ENCODE measurements at regions of chr7 and their contacts with region 1.

Region 1: GRCh38 chr7:64098-64915 is 128.1 kb upstream of the FAM20C start:
- DNase-seq: peak; percentile 49
- H3K4me3 ChIP-seq: no peak overlapping the region
- H3K27ac ChIP-seq: no peak overlapping the region
- H3K4me1 ChIP-seq: no peaks in the 10 kb centered on the region
- H3K27me3 ChIP-seq: no peaks in the 10 kb centered on the region
- CTCF ChIP-seq: peak; percentile 31 to 55
- POLR2A ChIP-seq: no peak

Region 2: DNA sequence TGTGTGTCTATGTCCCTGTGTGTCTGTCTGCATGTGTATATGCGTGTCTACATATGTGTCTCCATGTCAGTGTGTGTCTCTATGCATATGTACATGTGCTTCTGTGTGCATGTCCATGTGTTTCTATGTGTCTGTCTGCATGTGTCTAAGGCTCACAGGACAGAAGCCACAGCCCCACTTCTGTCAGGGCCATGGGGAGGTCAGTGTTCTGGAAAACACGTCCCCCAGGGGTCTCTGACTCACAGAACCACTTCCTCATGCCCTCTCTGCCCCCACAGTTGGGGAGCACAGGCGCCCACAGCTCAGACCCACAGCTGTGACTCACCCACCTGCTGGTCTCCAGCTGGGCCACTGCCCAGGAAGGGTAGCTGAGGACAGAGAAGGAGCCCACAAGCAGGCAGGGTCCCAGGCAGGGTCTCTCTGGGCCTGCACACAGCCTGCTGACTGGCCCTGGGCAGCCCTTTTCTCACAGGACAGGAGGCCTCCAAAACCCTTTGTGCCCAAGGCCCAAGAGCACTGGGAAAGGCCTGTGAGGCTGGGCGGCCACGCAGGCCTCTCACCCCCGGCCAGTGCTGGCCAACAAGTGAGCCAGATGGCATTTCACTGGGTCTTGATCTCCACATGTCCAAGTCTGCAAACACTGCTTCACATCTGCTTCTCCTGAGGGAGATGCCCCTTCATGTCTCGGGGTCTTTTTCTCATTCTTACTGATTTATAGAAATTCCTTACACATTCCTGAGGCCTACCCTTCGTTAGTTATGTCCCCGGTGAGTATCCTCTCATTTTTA is 25.1 kb after region 1 on chr7:
- CTCF ChIA-PET with region 1: interaction called, 18 read pairs
- POLR2A ChIA-PET with region 1: no interaction called
- dilution Hi-C with region 1: no loop called
- intact Hi-C with region 1: no loop called
- DNase-seq: peak; percentile 84
- H3K4me3 ChIP-seq: no peak overlapping the region
- H3K27ac ChIP-seq: peak overlapping the region; percentile 37
- H3K4me1 ChIP-seq: peaks cover 24% of the 10 kb centered on the region
- H3K27me3 ChIP-seq: no peaks in the 10 kb centered on the region
- CTCF ChIP-seq: no peak
- POLR2A ChIP-seq: no peak

Region 3: DNA sequence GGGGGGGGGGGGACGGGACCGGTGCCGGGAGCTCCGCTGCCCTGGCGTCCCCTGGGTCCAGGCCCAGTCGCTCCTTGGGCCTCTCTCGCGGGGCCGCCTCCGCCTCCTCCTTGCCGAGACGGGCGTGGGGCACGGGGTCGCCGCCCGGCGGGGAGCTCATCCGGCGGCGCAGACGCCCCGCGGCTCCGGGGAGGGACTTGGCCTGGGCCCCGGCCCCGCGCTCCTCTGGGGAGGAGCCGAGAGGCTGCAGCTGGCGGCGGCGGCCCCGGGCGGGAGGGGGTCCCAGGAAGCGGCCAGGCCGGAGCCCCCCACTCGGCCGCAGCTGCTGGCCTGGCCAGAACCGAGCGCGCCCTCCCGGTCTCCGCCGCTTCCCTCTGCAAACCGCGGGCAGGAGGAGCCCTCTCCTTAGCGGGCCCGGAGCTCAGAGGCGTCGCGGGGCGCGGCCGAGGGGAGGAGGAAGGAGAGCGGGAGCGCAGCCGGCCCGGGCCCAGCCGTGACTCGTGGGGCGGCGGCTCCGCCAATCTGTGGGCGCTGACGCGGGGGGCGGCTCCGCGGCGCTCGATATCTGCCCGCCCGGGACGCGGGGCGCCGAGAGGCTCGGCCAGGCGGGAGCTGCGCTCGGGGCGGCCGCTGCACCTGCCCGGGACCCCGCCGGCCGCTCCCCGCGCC is 127.8 kb after region 1 on chr7 and contains the start of gene FAM20C:
- CTCF ChIA-PET with region 1: interaction called, 20 read pairs
- POLR2A ChIA-PET with region 1: no interaction called
- dilution Hi-C with region 1: no loop called
- intact Hi-C with region 1: no loop called
- DNase-seq: peak; percentile 75
- H3K4me3 ChIP-seq: peak within 1 kb of the TSS; percentile 61 to 94 (median 80)
- H3K27ac ChIP-seq: peak within 1 kb of the TSS; percentile 18
- H3K4me1 ChIP-seq: peaks cover 15% of the 10 kb centered on the region
- H3K27me3 ChIP-seq: no peaks in the 10 kb centered on the region
- CTCF ChIP-seq: no peak
- POLR2A ChIP-seq: no peak
- total RNA-seq, gene FAM20C: 34.5 and 44.4 TPM in 2 replicates

Region 4: GRCh38 chr7:200713-201112 is 136.4 kb after region 1 on chr7:
- CTCF ChIA-PET with region 1: interaction called, 16 read pairs
- POLR2A ChIA-PET with region 1: no interaction called
- dilution Hi-C with region 1: no loop called
- intact Hi-C with region 1: no loop called
- DNase-seq: no peak
- H3K4me3 ChIP-seq: no peak overlapping the region
- H3K27ac ChIP-seq: no peak overlapping the region
- H3K4me1 ChIP-seq: no peaks in the 10 kb centered on the region
- H3K27me3 ChIP-seq: no peaks in the 10 kb centered on the region
- CTCF ChIP-seq: no peak
- POLR2A ChIP-seq: no peak